ENCODE measurements at regions of chr4 and their contacts with region 1.

Region 1: GRCh38 chr4:121900132-121900983 is 30.1 kb upstream of the BBS7 start:
- DNase-seq: peak in 4 of 5 donors; percentile 21 to 29 (median 24)
- ATAC-seq: peak in 2 of 4 donors; percentile 46 to 68
- H3K4me3 ChIP-seq: no peak overlapping the region
- H3K27ac ChIP-seq: no peak overlapping the region
- H3K4me1 ChIP-seq: no peaks in the 10 kb centered on the region
- H3K27me3 ChIP-seq: peaks cover 0 to 14% (median 0%) of the 10 kb centered on the region in 9 donors
- CTCF ChIP-seq: peak; percentile 50 to 76 (median 64)
- POLR2A ChIP-seq: no peak

Region 2: DNA sequence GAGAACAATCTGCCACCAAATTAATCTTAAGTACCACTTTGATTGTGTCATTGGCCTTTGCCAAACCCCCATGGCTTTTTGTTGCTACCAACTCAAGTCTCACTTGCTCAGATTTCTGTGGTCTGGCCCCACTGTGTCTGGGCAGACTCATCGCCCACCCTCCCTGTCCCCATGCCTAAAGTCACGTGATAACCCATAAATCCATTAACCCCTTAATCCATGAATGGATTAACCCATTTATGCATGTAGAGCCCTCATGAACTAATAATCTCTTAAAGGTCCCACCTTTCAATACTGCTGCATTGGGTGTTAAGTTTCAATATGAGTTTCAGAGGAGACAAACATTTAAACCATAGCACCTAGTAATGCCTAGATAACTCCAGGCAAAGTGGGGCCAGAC is 173.3 kb after region 1 on chr4:
- intact Hi-C with region 1: no loop called
- DNase-seq: no peak
- ATAC-seq: no peak
- H3K4me3 ChIP-seq: no peak overlapping the region
- H3K27ac ChIP-seq: no peak overlapping the region
- H3K4me1 ChIP-seq: no peaks in the 10 kb centered on the region
- H3K27me3 ChIP-seq: peaks cover 0 to 5% (median 0%) of the 10 kb centered on the region in 9 donors
- CTCF ChIP-seq: no peak
- POLR2A ChIP-seq: no peak

Region 3: GRCh38 chr4:122218762-122219161 is 318.4 kb after region 1 on chr4:
- intact Hi-C with region 1: loop called in 4 of 10 experiments (anchors 5 to 10 kb)
- DNase-seq: no peak
- ATAC-seq: no peak
- H3K4me3 ChIP-seq: no peak overlapping the region
- H3K27ac ChIP-seq: no peak overlapping the region
- H3K4me1 ChIP-seq: no peaks in the 10 kb centered on the region
- H3K27me3 ChIP-seq: no peaks in the 10 kb centered on the region
- CTCF ChIP-seq: peak in 11 of 12 donors; percentile 20 to 46 (median 39)
- POLR2A ChIP-seq: no peak

Region 4: DNA sequence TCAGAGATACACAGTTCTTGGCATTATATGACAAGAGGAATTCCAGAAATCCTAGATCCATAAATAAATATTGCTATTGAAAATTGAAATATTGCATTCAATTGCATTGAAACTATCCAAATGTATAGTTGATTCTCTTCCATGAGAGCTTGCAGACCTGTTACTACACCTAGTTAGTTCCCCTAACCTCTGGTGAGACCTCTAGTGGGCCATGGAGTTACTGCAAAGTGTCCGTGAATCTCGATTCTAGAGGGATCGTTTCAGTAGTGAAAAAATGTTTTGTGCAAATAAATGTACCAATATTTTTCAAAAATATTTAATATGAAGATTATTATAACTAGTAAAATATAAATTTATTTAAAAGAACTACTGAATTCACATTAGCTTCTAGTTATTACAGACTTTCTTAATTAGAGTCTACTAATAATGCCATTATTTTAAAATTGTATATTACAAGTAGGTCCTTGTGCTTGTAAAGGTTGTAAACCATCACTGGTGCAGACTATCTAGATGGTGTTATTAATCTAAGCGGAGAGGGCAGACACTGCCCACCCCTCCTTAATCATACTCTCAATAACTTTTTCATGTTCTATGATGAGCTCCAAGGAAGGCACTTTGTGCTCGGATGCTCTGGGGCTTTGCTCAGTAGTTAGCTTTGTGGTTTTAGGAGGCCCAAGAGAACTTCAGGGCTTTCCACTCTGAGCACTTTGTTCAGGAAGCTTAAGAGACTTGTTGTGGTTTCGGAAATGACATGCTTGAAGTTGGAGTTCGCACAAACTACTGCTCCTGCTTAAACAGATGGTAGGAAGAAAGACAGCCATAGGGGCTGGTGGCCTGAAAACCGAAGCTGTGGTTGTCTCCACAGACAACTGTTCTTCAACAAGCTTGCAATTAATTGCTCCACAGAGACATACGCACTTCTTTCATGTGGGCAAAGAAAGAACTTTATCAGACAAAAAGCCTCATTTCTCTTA is 677.7 kb after region 1 on chr4:
- intact Hi-C with region 1: loop called in 9 of 10 experiments (anchors 5 to 10 kb)
- DNase-seq: no peak
- ATAC-seq: peak in 2 of 4 donors; percentile 63
- H3K4me3 ChIP-seq: no peak overlapping the region
- H3K27ac ChIP-seq: no peak overlapping the region
- H3K4me1 ChIP-seq: peaks cover 0 to 4% (median 0%) of the 10 kb centered on the region in 12 donors
- H3K27me3 ChIP-seq: no peaks in the 10 kb centered on the region
- CTCF ChIP-seq: peak; percentile 34 to 68 (median 54)
- POLR2A ChIP-seq: no peak